ENCODE measurements at regions of chr3 and their contacts with region 1.

Region 1: GRCh38 chr3:143831208-143831607 is 17.1 kb downstream of the SLC9A9 start:
- DNase-seq: peak; percentile 72
- H3K4me3 ChIP-seq: no peak overlapping the region
- H3K27ac ChIP-seq: peak overlapping the region; percentile 67
- H3K4me1 ChIP-seq: peaks cover 17% of the 10 kb centered on the region
- H3K27me3 ChIP-seq: no peaks in the 10 kb centered on the region
- CTCF ChIP-seq: no peak
- POLR2A ChIP-seq: no peak

Region 2: DNA sequence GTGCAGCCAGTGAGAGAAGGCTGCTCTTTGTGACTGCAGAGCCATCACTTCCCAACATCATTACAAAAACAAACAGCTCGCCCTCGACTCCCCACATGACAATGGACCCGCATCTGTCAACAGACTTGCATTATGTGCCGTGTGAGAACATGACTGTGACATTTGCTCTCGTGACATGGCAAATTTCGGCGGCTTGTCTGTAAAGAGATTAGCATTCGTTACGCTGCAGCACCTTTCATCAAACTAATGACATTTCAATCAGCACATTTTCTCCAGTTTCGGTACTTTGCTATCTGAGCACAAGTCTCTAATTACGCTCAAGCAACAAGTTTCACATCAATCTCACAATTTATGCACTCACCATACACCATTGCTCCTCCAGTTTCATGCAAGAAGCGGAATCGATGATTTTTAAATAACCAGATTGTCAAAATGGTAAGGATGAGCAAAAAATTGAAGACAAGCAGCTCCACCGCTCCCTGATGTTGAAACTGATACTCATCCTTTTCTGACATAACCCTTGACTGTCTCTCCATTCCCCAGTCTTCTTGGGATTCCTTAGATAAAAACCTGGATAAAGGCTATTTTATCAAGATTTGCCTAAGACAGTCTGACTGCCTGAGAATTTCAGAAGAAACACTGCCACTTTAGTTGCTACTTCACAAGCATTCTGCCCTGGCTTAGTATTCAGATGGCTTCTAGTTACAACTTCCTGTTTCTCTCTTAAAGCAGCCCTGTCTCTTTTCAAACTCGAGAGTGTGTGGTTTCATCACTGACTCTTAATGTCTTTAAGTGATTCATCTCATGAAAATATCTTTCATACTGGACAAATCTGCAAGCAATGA is 16.8 kb after region 1 on chr3 and contains the start of gene SLC9A9:
- CTCF ChIA-PET with region 1: interaction called, 3 read pairs
- POLR2A ChIA-PET with region 1: no interaction called
- dilution Hi-C with region 1: no loop called
- intact Hi-C with region 1: loop called (anchors 2 kb)
- DNase-seq: peak; percentile 58
- H3K4me3 ChIP-seq: peak within 1 kb of the TSS; percentile 43 to 91 (median 51)
- H3K27ac ChIP-seq: no peak within 1 kb of the TSS
- H3K4me1 ChIP-seq: peaks cover 15% of the 10 kb centered on the region
- H3K27me3 ChIP-seq: no peaks in the 10 kb centered on the region
- CTCF ChIP-seq: no peak
- POLR2A ChIP-seq: no peak
- total RNA-seq, gene SLC9A9: 1.3 and 1.5 TPM in 2 replicates

Region 3: GRCh38 chr3:144148356-144148755 is 317.1 kb after region 1 on chr3:
- CTCF ChIA-PET with region 1: no interaction called
- POLR2A ChIA-PET with region 1: no interaction called
- dilution Hi-C with region 1: no loop called
- intact Hi-C with region 1: no loop called
- DNase-seq: no peak
- H3K4me3 ChIP-seq: no peak overlapping the region
- H3K27ac ChIP-seq: no peak overlapping the region
- H3K4me1 ChIP-seq: no peaks in the 10 kb centered on the region
- H3K27me3 ChIP-seq: no peaks in the 10 kb centered on the region
- CTCF ChIP-seq: no peak
- POLR2A ChIP-seq: no peak

Measured in endothelial cell of umbilical vein (primary cell).